Esophagus squamous epithelium (tissue), 5 donors: ENCODE measurements at regions of chr1 and their contacts with region 1.

Region 1: DNA sequence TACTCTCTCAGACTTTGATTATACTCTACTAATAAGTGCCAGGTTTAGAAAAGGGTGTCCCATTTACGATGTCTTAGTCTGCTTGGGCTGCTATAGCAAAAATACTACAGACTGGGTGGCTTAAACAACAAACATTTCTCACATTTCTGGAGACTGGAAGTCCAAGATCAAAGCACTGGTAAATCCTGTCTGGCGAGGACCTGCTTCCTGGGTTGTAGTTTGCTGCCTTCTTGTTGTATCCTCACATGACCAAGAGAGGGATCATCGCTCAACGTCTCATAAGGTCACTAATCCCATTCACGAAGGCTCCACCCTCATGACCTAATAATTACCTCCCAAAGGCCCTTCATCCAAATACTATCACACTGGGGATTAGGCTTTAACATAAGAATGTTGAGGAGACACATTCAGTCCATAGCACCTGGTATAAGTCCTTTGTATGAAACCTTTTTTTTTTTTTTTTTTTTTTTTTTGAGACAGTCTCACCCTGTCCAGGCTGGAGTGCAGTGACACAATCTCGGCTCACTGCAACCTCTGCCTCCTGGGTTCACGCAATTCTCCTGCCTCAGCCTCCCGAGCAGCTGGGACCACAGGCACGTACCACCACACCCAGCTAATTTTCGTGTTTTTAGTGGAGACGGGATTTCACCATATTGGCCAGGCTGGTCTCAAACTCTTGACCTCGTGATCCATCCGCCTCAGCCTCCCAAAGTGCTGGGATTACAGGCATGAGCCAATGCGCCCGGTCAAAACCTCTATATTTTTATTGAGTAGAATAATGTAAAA is 12.2 kb downstream of the PRDX6 start:
- DNase-seq: no peak
- H3K4me3 ChIP-seq: no peak overlapping the region
- H3K27ac ChIP-seq: peak overlapping the region in 2 of 4 donors; percentile 62 to 71
- H3K4me1 ChIP-seq: peaks cover 0 to 10% (median 0%) of the 10 kb centered on the region in 3 donors
- H3K27me3 ChIP-seq: no peaks in the 10 kb centered on the region
- CTCF ChIP-seq: peak in 1 of 6 experiments; percentile 9
- POLR2A ChIP-seq: no peak

Region 2: DNA sequence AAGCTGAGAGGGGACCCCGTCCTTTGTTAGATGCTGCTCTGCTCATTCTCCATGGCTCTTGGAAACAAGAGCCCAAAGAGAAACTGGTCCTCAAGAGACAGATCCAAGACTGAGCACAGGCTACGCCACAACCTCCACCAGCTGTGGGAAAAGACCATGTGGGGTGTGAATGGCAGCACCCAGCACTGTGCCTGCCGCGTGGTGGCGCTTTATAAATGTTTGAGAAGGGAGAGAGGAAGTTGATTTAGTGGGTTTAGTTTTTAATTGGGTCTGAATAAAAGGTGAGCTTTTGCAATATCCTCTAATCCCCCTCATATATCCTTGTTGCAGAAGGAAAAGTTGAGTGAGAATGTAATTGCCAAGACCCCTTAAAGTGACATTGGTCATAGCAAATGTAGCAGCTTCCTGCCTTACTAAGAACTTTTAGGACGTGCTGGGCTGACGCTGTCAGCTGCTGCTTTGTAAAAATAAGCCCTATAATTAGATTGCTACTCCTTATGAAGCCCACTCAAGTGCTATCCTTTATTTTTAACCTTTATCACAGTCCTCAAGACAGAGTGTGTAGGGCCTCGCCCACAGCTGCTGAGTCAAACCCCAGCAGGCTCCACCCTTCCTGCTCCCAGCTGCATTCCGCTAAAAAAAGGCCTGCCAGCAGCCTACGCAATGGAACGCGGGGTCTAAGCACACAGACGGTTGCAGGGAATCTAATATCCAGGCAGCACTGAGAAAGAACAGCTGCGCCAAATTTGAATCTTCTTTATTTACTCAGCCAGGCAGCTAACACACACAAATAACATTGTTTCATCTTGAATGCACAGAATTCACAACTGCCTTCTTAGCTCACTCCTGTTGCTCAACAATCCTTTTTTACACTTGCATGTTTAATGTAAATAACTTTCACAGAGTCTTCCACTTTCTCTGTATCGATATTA is 59.6 kb before region 1 on chr1:
- intact Hi-C with region 1: loop called (anchors 10 kb)
- DNase-seq: peak; percentile 15
- H3K4me3 ChIP-seq: peak overlapping the region in 3 of 4 donors; percentile 20 to 42 (median 22)
- H3K27ac ChIP-seq: peak overlapping the region; percentile 69 to 93 (median 88)
- H3K4me1 ChIP-seq: peaks cover 9 to 28% (median 16%) of the 10 kb centered on the region in 3 donors
- H3K27me3 ChIP-seq: no peaks in the 10 kb centered on the region
- CTCF ChIP-seq: peak; percentile 47 to 70 (median 57)
- POLR2A ChIP-seq: no peak